ENCODE measurements at regions of chr7 and their contacts with region 1.

Region 1: GRCh38 chr7:4681886-4682620 is at the start of gene FOXK1:
- DNase-seq: peak; percentile 88
- H3K4me3 ChIP-seq: peak within 1 kb of the TSS; percentile 76 to 98 (median 88)
- H3K27ac ChIP-seq: peak within 1 kb of the TSS; percentile 93 to 96 (median 94)
- H3K4me1 ChIP-seq: peaks cover 0 to 40% (median 30%) of the 10 kb centered on the region in 4 donors
- H3K27me3 ChIP-seq: no peaks in the 10 kb centered on the region
- CTCF ChIP-seq: no peak
- EP300 ChIP-seq: no peak
- POLR2A ChIP-seq: peak in 1 of 2 donors; percentile 33
- total RNA-seq, gene FOXK1: 15.8 to 47.1 (median 18.0) TPM

Region 2: GRCh38 chr7:4479367-4480039 is 202.6 kb before region 1 on chr7:
- intact Hi-C with region 1: no loop called
- DNase-seq: no peak
- H3K4me3 ChIP-seq: no peak overlapping the region
- H3K27ac ChIP-seq: no peak overlapping the region
- H3K4me1 ChIP-seq: no peaks in the 10 kb centered on the region
- H3K27me3 ChIP-seq: no peaks in the 10 kb centered on the region
- CTCF ChIP-seq: no peak
- EP300 ChIP-seq: no peak
- POLR2A ChIP-seq: no peak

Region 3: DNA sequence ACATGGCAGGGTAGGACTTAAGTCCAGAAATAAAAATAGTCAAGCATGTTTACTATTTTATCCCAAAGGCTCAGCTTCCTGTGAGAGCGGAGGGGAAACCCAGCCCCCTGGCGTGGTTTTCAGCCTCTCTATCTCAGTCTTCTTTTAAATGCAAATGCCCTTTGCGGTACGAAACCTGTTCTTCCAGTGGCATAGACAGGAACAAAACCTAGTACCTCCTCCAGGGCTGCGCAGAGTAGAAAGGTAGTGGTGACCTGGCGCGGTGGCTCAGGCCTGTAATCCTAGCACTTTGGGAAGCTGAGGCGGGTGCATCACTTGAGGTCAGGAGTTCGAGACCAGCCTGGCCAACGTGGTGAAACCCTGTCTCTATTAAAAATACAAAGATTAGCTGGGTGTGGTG is 181.2 kb before region 1 on chr7:
- intact Hi-C with region 1: no loop called
- DNase-seq: no peak
- H3K4me3 ChIP-seq: no peak overlapping the region
- H3K27ac ChIP-seq: no peak overlapping the region
- H3K4me1 ChIP-seq: no peaks in the 10 kb centered on the region
- H3K27me3 ChIP-seq: no peaks in the 10 kb centered on the region
- CTCF ChIP-seq: no peak
- EP300 ChIP-seq: no peak
- POLR2A ChIP-seq: no peak

Region 4: GRCh38 chr7:4725014-4725849 is 43.2 kb after region 1 on chr7:
- intact Hi-C with region 1: loop called (anchors 5 kb)
- DNase-seq: peak; percentile 88
- H3K4me3 ChIP-seq: peak overlapping the region; percentile 35 to 55 (median 54)
- H3K27ac ChIP-seq: peak overlapping the region; percentile 93 to 96 (median 94)
- H3K4me1 ChIP-seq: peaks cover 0 to 78% (median 62%) of the 10 kb centered on the region in 4 donors
- H3K27me3 ChIP-seq: no peaks in the 10 kb centered on the region
- CTCF ChIP-seq: no peak
- EP300 ChIP-seq: no peak
- POLR2A ChIP-seq: peak in 1 of 2 donors; percentile 40

Region 5: DNA sequence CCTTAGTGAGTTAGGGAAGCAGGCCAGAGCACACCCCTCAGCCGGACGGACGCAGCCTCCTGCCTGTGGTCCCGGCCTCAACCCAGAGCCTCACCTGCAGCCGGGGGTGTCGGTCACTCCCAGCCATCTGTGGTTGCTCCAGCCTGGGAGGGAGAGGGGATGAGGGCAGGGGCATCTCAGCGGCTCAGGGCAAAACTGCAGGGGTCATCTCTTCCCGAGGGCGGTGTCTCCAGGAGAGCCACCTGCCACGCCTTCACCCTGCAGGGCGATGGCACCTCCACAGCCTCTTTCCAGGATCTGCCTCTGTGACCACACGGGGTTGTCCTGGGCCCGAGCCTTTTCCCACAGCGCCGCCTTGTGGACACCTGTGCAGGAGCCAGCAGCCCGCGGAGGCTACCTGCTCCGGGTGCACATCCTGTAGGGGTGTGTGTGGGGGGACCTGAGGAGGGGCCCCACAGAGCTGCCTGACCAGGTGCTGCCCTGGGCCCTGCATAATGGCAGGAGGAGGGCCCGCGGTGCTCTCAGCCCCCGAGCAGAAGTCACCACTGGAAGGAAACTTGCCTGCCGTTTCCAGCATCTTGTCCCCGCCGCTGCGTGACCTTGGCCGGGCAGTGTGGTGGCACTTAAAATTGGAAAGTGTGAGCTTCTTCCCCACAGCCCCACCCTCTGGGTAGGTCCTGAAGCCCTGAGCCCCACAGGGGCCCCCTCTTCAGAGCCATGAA is 71.8 kb after region 1 on chr7:
- intact Hi-C with region 1: loop called (anchors 2 kb)
- DNase-seq: peak; percentile 90
- H3K4me3 ChIP-seq: no peak overlapping the region
- H3K27ac ChIP-seq: peak overlapping the region in 3 of 4 donors; percentile 17 to 66 (median 62)
- H3K4me1 ChIP-seq: peaks cover 0 to 15% (median 14%) of the 10 kb centered on the region in 4 donors
- H3K27me3 ChIP-seq: no peaks in the 10 kb centered on the region
- CTCF ChIP-seq: peak; percentile 87 to 94 (median 92)
- EP300 ChIP-seq: no peak
- POLR2A ChIP-seq: no peak

Region 6: DNA sequence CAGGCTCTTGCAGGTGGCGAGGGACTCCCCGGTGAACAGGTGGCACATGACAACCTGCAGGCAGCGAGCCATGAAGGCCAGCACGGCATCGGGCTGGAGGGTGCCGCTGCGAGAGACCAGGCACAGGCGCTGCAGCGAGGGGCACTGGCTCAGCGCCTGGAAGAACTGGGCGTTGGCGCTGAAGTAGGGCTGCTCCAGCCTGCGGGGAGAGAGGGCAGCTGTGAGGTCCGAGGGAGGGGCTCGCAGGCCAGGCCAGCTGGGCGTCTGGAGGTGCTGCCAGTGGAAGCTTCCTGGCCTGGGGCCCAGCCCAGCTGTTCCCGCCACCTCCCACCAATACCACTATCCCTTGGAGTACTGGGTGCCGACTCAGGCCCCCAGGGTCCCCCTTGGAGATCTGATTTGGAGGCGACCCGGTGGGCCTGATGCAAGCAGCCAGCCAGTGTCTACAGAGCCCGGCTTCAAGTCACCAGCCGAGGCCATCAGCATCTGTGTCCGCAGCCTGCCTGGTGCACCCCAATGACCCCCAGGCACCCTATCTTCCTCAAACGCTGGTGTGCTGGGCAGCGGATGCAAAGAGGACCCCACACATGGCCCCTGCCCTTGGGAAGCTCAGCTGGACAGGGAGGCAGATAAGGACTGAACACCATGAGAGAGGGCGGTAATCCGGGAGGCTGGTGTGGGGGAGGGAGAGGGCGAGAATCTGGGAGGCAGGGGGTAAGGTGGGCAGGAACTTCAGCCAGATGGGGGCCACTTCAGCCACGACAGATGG is 809.4 kb after region 1 on chr7:
- intact Hi-C with region 1: no loop called
- DNase-seq: peak; percentile 72
- H3K4me3 ChIP-seq: no peak overlapping the region
- H3K27ac ChIP-seq: peak overlapping the region in 3 of 4 donors; percentile 64 to 85 (median 73)
- H3K4me1 ChIP-seq: peaks cover 0 to 52% (median 44%) of the 10 kb centered on the region in 4 donors
- H3K27me3 ChIP-seq: no peaks in the 10 kb centered on the region
- CTCF ChIP-seq: no peak
- EP300 ChIP-seq: no peak
- POLR2A ChIP-seq: no peak